Activated CD4-positive, alpha-beta T cell treated with anti-CD3 and anti-CD28 coated beads for 36 hours (primary cell): ENCODE measurements at regions of chr10 and their contacts with region 1.

Region 1: DNA sequence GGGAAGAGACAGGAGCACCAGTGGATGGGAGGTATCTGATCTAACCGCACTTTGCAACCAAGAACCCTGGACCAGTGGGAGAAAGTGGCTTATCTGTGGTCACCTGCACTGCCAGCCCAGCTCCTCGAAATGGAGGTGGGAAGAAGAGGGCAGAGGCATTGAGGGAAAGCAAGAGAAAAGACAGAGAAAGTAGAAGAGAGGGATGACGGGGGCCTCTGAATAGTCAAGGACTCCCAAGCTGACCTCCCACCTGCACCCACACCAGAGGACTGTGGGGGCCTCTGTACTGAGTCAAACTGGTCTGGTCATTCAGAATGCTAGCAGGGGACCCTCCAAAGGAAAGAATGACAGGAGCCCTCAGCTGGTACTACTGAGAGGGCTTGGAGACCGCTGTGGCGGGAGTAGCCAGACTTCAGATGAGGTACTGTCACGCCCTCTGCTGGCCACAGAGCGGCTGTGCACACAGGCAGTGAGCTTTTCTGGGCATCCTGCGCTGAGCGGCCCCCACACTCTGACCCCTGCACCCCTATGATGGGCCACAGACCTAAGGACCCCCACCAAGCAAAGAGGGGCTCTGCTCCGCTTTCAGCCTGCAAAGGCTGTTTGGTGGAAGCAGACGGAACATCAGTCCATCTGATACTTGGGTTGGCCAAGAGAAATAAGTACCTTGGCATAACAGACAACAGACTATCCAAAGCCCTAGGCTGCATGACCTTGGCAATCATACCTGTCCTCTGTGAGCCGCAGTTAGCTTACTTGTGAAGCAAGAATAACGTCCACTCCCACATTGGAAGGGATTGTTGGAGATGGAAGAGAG is 112.9 kb downstream of the COL13A1 start:
- DNase-seq: peak; percentile 82
- ATAC-seq: peak; percentile 83
- H3K4me3 Mint-ChIP-seq: no peak overlapping the region
- H3K27ac Mint-ChIP-seq: no peak overlapping the region
- H3K4me1 Mint-ChIP-seq: no peaks in the 10 kb centered on the region
- H3K27me3 Mint-ChIP-seq: peaks cover 6% of the 10 kb centered on the region

Region 2: DNA sequence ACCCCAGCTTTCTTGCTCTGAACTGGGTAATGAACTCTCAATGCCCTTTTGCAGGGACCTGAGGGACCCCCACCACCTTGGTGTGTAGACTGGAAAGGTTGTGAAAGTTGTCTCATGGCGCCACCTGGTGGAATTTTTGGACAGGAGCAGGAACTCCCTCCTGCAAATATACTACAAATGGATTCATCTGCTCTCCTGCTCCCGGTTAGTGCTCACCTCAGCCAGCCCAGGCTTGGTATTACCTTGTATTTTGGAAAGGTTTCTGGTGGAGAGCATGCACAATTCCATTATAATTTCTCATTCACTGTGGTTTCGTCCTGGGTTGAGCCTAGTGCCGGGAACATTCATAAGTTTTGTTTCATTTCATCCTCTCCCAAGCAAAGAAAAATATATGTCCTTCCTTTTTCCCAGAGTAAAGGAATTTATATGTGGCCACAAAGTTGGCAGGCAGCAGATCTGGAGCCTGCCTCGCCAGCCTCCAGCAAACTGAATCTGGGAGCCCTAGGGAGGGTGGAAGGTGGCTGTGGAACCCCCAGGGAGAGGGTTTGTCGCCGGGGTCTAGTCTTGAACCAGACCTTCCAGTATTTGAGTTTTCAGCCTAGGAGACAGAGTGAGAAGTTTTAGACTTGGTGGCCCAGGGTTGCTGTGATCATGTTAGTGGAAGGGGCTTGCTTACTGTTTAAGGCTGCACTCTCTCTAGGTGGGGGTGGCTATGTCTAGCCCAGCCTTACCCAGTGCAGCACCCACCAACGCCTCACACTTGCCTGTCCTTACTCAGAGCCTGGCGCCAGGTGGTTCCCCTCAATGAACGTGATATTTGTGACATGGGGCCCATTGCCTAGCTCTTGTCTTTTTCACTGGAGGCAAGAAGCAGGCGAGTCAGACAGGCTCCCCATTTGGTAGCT is 275.1 kb before region 1 on chr10:
- CTCF ChIA-PET with region 1: interaction called, 9 read pairs
- POLR2A ChIA-PET with region 1: no interaction called
- intact Hi-C with region 1: loop called (anchors 1 to 10 kb)
- DNase-seq: peak; percentile 81
- ATAC-seq: peak; percentile 76
- H3K4me3 Mint-ChIP-seq: no peak overlapping the region
- H3K27ac Mint-ChIP-seq: no peak overlapping the region
- H3K4me1 Mint-ChIP-seq: no peaks in the 10 kb centered on the region
- H3K27me3 Mint-ChIP-seq: no peaks in the 10 kb centered on the region

Region 3: GRCh38 chr10:69742928-69743602 is 171.5 kb before region 1 on chr10:
- CTCF ChIA-PET with region 1: no interaction called
- POLR2A ChIA-PET with region 1: no interaction called
- intact Hi-C with region 1: loop called (anchors 2 to 10 kb)
- DNase-seq: peak; percentile 61
- ATAC-seq: peak; percentile 39
- H3K4me3 Mint-ChIP-seq: no peak overlapping the region
- H3K27ac Mint-ChIP-seq: no peak overlapping the region
- H3K4me1 Mint-ChIP-seq: peaks cover 7% of the 10 kb centered on the region
- H3K27me3 Mint-ChIP-seq: peaks cover 10% of the 10 kb centered on the region

Region 4: DNA sequence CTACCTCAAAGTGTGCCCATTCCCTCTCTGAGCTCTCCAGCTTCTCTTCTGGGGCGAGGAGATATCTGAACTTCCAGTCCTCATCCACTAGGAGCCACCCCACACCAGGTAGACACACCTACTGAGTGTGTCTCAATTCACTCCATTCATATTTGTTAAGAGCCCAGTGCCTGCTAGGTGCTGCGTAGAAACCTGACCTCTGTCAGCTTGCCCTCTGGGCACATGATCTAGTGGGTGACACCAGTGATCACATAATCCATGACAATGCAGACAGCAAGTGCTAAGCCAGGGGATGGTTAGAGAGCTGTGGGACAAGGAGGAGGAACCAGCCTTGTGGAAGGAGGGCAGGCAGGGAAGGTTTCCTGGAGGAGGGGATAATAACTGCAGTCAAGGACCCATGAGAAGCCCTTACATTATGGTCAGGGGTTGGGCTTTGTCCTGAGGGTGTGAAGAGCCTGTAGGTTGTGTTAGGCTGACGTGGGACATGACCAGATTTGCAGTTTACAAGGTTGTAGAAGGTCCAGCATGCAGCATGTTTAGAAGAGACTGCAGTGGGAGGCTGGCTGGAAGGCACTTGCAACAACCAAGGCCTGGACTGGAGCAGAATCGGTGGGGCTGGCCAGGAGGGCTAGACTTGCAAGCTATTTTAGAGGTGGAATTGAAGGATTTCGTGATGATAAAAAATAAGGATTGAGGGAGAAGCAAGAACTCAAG is 31.1 kb before region 1 on chr10:
- CTCF ChIA-PET with region 1: interaction called, 10 read pairs
- POLR2A ChIA-PET with region 1: no interaction called
- intact Hi-C with region 1: no loop called
- DNase-seq: peak; percentile 13
- ATAC-seq: peak; percentile 16
- H3K4me3 Mint-ChIP-seq: no peak overlapping the region
- H3K27ac Mint-ChIP-seq: no peak overlapping the region
- H3K4me1 Mint-ChIP-seq: no peaks in the 10 kb centered on the region
- H3K27me3 Mint-ChIP-seq: peaks cover 5% of the 10 kb centered on the region

Region 5: DNA sequence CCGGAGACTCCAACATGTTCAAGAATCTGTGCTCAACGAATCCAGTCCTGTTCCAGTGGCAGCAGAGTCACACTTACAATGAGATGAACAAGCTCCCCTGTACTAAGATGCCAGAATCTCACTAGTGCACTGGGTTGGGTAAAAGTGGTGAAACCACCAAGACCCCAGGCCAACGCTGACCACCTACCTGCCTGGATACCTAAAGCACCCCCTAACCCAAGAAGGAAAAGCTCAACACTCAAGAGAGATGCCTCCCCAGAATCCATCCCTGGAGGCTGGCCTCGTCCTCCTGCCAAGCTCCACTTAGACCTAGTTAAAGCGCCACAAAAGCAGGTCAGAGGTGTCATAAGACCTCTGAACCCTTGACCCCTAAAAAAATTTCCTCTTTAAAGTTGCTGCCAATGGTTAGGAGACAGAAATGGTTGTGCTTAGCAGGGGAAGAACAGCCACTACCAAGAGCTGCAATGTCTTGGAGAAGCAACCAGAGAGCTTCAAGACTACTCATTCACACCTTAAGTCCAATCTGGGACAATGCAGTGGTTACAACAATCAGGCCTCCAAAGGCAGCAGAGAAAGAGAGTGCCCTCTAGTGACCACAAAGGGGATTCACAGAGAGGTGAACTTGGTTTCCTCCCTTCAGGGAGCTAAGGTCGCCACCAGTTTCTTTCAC is 43.4 kb after region 1 on chr10:
- CTCF ChIA-PET with region 1: interaction called, 11 read pairs
- POLR2A ChIA-PET with region 1: no interaction called
- intact Hi-C with region 1: no loop called
- DNase-seq: peak; percentile 34
- ATAC-seq: peak; percentile 72
- H3K4me3 Mint-ChIP-seq: no peak overlapping the region
- H3K27ac Mint-ChIP-seq: no peak overlapping the region
- H3K4me1 Mint-ChIP-seq: no peaks in the 10 kb centered on the region
- H3K27me3 Mint-ChIP-seq: peaks cover 3% of the 10 kb centered on the region

Region 6: DNA sequence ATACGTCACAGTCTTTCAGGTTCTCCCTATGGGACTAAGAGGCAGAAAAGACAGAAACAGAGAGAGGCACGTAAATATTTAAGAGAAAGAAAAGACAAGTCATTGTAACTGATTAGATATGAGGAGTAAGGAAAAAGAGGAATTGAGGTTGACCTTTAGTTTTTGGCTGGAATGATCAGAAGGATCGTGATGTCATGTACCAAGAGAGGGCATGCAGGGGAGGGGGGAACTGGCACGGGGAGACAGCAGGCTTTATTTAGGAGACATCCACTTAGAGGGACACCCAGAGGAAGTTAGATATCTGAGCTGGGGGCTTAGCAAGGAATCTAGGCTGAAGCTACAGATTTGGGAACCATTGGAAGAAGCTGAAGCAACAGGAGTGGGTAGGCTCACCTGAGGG is 477.0 kb after region 1 on chr10:
- CTCF ChIA-PET with region 1: no interaction called
- POLR2A ChIA-PET with region 1: no interaction called
- intact Hi-C with region 1: no loop called
- DNase-seq: no peak
- ATAC-seq: no peak
- H3K4me3 Mint-ChIP-seq: no peak overlapping the region
- H3K27ac Mint-ChIP-seq: no peak overlapping the region
- H3K4me1 Mint-ChIP-seq: peaks cover 5% of the 10 kb centered on the region
- H3K27me3 Mint-ChIP-seq: peaks cover 5% of the 10 kb centered on the region